Activated naive CD4-positive, alpha-beta T cell treated with anti-CD3 and anti-CD28 coated beads for 36 hours (primary cell): ENCODE measurements at regions of chr17 and their contacts with region 1.

Region 1: DNA sequence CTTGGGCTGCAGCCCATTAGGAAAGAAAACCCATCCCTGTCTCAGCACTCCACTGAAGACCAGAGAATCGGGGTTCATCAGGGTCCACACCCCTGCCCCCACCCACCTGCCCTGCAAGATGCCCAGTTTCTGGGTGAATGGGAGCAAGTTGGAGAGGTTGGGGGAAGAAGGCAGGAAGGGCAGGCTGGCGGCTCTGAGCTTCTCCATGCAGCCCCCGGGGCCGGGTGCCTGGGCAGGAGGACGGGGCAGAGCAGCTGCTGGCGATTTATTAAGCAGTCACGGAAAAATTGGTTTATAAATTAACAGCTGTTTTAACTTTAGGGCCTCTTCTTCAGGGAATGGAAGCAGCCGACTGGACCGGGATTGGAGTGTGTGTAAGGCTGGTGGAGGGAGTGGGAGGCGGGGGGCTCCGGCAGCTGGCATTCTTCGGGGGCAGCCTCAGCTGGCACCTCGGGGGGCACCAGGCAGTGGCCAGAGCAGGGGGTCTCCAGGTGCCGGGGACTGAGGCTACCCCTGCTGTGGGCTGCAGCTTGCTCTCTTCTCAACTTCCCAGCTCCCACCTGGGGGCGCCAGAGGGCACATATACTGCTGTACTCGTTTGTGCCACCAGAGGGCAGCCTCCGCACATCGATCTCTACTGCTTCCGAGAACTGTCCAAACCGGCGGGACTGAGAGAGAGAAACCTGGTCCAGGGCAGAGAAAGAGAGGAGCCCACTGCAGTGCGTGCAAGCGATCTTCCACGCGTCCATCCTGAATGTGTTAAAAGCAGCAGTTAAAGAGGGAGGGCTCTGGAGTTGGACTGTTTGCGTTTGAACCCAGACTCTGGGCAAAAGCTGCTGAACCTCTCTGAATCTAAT is 5.0 kb upstream of the PPP1R1B start:
- DNase-seq: peak; percentile 92
- H3K4me3 Mint-ChIP-seq: peak overlapping the region; percentile 68
- H3K27ac Mint-ChIP-seq: peak overlapping the region; percentile 67
- H3K4me1 Mint-ChIP-seq: peaks cover 27% of the 10 kb centered on the region
- H3K27me3 Mint-ChIP-seq: peaks cover 20% of the 10 kb centered on the region

Region 2: DNA sequence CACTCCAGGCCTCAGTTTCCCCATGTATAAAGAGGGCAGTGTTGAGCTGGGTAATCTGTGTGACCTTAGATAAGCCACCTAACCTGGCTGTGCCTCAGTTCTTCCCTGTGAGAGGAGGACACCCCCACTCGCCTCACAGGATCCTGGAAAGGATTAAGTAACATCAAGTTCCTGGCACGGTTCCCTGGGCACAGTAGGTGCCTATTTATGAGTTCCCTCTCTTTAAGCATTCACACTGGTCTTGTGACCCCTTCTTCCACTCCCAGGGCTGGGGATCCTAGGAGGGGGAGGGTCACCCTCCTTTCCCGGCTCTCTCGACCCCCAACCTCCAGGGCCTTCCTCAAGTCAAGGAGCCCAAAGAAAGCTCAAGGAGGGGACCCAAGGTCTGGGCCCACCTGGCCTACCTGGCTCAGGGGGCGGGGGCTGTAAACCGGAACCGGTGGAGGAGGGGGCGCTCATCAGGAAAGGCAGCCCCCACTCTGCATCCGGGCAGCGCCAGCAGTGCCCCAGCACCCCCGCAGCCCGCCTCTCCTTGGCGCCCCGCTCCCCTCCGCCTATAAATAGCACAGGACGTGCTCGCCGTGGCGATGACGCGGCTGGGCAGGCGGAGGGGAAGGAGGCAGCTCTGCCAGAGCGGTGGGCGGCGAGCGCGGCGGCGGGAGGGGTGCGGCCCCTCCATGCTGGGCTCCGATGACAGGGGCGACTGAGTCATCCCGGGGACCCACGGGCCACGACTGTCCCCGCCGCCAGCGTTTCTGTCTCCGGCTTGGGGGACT is 412.2 kb before region 1 on chr17:
- CTCF ChIA-PET with region 1: no interaction called
- intact Hi-C with region 1: loop called (anchors 5 kb)
- DNase-seq: peak; percentile 79
- H3K4me3 Mint-ChIP-seq: peak overlapping the region; percentile 24
- H3K27ac Mint-ChIP-seq: no peak overlapping the region
- H3K4me1 Mint-ChIP-seq: peaks cover 31% of the 10 kb centered on the region
- H3K27me3 Mint-ChIP-seq: no peaks in the 10 kb centered on the region

Region 3: DNA sequence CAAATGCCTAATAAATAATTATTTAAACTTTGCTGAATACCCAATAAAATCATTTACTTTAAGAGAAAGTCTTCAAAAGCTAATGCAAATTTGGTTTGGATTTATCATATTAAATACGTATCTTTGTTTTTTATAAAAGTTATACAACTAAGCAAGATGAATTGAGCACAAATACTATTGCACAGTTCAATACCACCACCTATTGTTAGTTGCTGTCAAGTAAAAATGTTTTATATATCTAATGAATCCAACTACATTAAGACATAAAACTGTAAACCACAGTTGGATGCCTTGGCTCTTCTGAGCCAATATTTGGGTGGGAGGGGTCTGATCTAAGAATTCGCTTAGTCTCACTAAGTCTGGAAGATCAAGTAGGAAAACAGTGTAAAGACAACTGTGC is 228.0 kb before region 1 on chr17:
- CTCF ChIA-PET with region 1: no interaction called
- intact Hi-C with region 1: no loop called
- DNase-seq: no peak
- H3K4me3 Mint-ChIP-seq: no peak overlapping the region
- H3K27ac Mint-ChIP-seq: no peak overlapping the region
- H3K4me1 Mint-ChIP-seq: peaks cover 19% of the 10 kb centered on the region
- H3K27me3 Mint-ChIP-seq: no peaks in the 10 kb centered on the region

Region 4: DNA sequence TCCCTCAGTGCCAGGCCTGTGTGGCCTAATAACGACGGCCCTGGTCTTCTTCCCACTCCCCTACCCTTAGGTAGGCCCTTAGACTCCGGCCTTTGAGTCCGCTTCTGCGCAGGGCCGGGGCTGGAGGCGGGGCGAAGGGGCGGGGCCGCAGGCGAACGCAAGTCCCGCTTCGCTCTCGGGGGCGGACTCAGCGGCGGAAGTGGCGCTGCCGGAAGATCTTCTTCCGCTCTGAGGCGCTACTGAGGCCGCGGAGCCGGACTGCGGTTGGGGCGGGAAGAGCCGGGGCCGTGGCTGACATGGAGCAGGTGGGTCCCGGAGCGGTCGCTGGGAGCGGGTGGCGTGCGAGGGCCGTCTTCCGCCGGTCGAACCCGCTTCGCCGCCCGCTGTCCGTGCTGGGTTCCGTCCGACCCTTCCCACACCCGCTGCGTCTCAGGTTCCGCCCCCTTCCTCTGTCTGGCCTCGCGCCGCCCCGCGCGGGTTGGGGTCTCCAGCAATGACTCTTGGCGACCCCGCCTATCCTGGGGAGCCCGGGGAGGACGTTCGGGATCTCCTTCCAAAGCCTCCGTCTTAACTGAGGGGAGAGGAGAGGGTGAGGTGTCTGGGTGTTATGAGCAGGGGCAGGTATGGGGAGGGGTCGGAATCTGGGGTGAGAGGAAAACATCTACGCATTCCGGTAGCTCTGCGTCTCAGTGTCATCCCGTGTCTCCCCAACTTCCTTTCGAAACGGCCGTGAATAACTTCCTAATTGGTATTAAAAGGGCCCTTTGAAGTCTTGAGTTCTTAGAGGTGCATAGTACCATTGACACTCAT is 15.4 kb after region 1 on chr17 and contains the start of gene STARD3:
- CTCF ChIA-PET with region 1: interaction called, 213 read pairs
- intact Hi-C with region 1: loop called (anchors 1 kb)
- DNase-seq: peak; percentile 94
- H3K4me3 Mint-ChIP-seq: peak within 1 kb of the TSS; percentile 92
- H3K27ac Mint-ChIP-seq: peak within 1 kb of the TSS; percentile 93
- H3K4me1 Mint-ChIP-seq: peaks cover 49% of the 10 kb centered on the region
- H3K27me3 Mint-ChIP-seq: no peaks in the 10 kb centered on the region
- total RNA-seq, gene STARD3: 56.1 to 56.8 TPM

Region 5: DNA sequence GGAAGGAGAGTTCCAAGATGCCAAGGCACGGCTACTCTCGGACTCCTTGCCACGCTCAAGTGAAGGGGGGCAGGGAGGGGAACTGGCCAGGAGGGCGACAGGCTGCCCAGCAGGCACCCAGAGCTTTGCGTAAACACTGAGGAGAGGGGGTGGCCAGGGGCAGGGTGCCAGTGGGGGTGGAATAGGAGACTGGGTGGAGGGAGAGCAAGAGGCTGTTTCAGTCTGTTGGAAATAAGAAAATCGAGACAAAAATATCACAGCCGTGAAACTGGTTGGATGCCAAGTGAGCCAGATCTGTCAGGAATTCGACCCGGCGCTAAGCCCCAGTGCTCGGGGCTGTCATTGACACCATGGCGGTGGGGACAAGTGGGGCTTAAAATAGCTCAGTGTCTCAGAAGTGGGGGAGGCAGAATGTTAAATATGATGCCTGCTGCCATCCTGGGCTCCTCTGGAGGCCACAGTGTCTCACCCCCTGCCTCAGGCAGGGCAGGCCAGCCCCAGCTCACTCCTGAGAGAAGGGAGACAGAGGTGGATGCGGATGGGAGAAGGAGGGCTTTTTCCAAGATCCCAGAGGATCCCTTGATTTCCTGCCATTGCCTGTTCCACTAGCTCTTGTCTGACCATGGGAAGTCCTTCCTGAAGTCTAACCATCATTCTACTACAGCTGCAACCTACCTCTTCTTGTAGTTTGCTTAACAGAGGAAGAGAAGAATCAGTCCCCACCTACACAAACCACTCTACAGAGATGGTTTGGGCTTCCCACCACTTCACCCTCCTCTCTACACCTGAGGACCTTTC is 56.0 kb after region 1 on chr17:
- CTCF ChIA-PET with region 1: interaction called, 63 read pairs
- intact Hi-C with region 1: loop called (anchors 2 kb)
- DNase-seq: no peak
- H3K4me3 Mint-ChIP-seq: no peak overlapping the region
- H3K27ac Mint-ChIP-seq: peak overlapping the region; percentile 9
- H3K4me1 Mint-ChIP-seq: peaks cover 52% of the 10 kb centered on the region
- H3K27me3 Mint-ChIP-seq: no peaks in the 10 kb centered on the region

Region 6: DNA sequence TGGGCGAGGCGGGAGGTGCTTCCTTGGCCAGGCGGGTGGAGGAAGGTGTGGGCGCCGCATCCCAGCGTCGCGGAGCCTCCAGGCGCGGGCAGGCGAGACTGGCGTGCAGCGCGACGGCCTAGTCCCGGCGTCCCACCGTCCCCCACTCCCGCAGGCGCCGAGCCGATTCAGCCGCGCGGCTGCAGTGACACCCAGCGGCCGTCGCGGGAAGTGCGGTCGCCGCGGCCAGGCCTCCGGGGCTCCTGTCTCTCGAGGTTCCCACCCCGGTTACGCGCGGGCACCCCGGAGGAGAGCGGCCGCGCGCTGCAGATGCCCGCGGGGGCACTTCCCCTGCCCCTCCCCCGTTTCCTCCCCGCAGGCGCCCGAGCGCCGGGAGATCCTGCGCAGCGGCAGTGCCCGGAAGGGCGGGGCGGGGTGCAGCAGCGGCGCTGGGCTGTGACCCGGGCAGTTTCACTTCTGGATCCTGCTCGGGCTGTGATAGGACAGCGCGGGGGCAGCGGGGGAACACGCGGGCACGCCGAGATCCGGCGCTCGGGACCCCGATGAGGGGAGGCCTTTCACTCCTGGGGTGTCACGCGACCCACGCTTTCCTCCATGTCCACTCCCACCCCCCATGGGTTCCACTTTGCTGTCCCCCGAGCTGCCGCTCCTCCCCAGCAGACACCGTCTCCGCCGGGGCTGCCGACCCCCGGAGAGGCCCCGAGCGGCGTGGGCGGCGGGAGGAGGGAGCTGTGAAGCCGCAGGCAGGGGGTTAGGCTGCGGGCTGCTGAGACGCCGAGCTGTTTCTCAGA is 132.6 kb after region 1 on chr17:
- CTCF ChIA-PET with region 1: interaction called, 16 read pairs
- intact Hi-C with region 1: loop called (anchors 1 kb)
- DNase-seq: peak; percentile 96
- H3K4me3 Mint-ChIP-seq: peak overlapping the region; percentile 76
- H3K27ac Mint-ChIP-seq: peak overlapping the region; percentile 59
- H3K4me1 Mint-ChIP-seq: peaks cover 59% of the 10 kb centered on the region
- H3K27me3 Mint-ChIP-seq: no peaks in the 10 kb centered on the region

Region 7: DNA sequence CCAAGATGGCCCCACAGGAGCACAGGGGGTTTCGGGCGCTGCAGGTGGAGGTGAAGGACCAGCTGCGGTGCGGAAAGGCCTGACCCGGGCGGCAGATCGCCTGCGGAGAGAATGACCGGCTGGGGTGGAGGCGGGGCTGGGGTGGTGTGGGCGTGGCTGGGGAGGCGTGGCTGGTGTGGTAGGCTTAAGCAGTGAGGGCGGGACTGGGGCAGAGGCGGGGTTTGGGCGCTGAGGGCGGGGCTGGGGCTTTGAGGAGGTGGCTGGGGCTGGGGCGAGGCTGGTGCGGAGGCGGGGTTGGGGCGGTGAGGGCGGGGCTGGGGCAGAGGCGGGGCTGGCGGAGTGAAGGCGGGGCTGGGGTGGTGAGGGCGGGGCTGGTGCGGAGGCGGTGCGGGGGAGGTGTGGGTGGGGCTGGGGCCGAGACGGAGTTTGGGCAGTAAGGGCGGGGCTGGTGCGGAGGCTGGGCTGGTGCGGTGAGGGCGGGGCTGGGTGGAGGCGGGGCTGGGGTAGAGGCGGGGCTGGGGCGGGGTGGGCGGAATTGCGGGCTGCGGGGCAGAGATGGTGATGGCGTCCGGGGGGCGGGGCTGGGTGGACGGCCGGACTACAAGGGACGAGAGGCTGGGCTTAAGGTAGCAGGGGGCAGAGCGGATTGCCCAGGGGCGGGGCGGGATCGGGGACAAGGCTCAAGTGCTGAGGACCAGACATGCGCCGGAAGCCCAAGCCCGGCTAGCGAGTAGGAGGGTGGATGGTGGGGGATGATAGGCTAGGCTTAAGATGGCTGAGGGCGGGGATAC is 331.1 kb after region 1 on chr17:
- CTCF ChIA-PET with region 1: interaction called, 13 read pairs
- intact Hi-C with region 1: no loop called
- DNase-seq: peak; percentile 98
- H3K4me3 Mint-ChIP-seq: peak overlapping the region; percentile 79
- H3K27ac Mint-ChIP-seq: peak overlapping the region; percentile 66
- H3K4me1 Mint-ChIP-seq: peaks cover 10% of the 10 kb centered on the region
- H3K27me3 Mint-ChIP-seq: no peaks in the 10 kb centered on the region

Region 8: GRCh38 chr17:39988206-39988810 is 366.6 kb after region 1 on chr17:
- CTCF ChIA-PET with region 1: no interaction called
- intact Hi-C with region 1: no loop called
- DNase-seq: no peak
- H3K4me3 Mint-ChIP-seq: no peak overlapping the region
- H3K27ac Mint-ChIP-seq: no peak overlapping the region
- H3K4me1 Mint-ChIP-seq: peaks cover 13% of the 10 kb centered on the region
- H3K27me3 Mint-ChIP-seq: no peaks in the 10 kb centered on the region